HCT116 (cell line): ENCODE measurements at regions of chr9 and their contacts with region 1.

Region 1: DNA sequence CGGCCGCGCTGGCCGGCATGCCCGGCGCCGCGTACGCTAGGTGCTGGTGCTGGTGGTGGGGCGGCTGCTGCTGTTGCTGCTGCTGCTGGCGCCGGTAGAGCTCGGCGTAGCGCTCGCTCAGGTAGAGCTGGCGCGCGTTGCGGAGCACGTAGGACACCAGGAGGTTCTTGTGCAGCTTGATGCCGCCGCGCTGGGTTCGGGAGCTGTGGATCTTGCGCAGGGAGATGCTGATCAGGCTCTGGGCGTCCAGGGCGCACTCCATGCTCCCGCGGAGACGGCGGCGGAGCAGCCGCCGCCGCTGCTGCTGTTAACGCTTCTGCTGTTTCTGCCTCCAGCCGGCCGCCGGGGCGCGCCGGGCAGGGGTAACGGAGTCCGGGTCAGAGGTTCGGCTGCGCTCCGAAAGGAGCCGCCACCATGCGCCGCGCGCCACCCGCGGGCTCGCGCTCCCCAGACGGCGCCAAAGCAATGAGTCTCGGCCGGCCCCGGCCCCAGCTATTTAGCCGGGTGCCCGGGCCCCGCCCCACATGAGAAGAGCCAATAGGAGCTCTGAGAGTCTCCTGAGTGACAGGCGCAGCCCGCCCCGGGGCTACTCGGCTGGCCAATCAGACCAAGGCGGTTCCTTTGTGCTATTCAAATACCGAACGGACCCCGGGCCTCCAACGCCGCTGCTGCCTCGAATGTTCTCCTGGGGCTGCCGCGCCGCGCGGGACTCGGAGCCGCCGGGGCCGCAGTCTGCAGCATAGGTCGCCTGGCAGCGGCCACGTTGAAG is at the start of gene IER5L:
- DNase-seq: peak; percentile 91
- ATAC-seq: peak; percentile 71
- H3K4me3 ChIP-seq: peak within 1 kb of the TSS; percentile 79 to 92
- H3K27ac ChIP-seq: peak within 1 kb of the TSS; percentile 98
- H3K4me1 ChIP-seq: peaks cover 56 to 80% of the 10 kb centered on the region in 2 experiments
- H3K27me3 ChIP-seq: no peaks in the 10 kb centered on the region
- CTCF ChIP-seq: no peak
- POLR2A ChIP-seq: peak; percentile 99
- RAD21 ChIP-seq: no peak
- total RNA-seq, gene IER5L: 195 TPM

Region 2: GRCh38 chr9:128881901-128882681 is 295.9 kb before region 1 on chr9 and contains the starts of genes KYAT1 and LRRC8A:
- CTCF ChIA-PET with region 1: no interaction called
- POLR2A ChIA-PET with region 1: no interaction called
- RAD21 ChIA-PET with region 1: no interaction called
- intact Hi-C with region 1: no loop called
- DNase-seq: peak; percentile 92
- ATAC-seq: peak; percentile 88
- H3K4me3 ChIP-seq: peak within 1 kb of the TSS; percentile 55 to 100
- H3K27ac ChIP-seq: peak within 1 kb of the TSS; percentile 76
- H3K4me1 ChIP-seq: peaks cover 7 to 25% of the 10 kb centered on the region in 2 experiments; a peak in 2 of 4 replicates
- H3K27me3 ChIP-seq: no peaks in the 10 kb centered on the region
- CTCF ChIP-seq: 0 out of 6 replicates have a peak, but pooled peaks of 1 of the 3 experiments have one; percentile 5
- POLR2A ChIP-seq: peak; percentile 75
- RAD21 ChIP-seq: no peak
- total RNA-seq, gene KYAT1: 10.1 TPM
- total RNA-seq, gene LRRC8A: 22.0 TPM

Region 3: DNA sequence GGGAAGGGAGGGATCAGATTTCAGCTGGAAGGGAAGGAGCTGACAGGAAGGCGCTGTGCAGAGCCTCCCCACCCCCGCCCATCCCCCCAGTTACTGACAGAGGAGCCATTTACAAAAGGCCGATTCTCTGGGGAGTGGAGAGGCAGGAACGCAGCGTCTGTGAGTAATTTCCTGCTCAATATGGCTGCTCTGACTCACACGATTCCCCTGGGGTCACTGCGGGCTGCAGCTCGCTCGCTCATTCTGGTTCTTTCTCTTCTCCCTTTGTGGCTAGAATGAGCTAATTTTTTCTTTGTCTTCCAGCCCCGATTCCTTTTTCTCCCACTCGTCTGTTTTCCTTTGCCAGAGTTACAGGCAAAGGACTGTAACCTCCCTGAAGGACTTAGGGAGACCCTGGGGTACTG is 38.0 kb before region 1 on chr9:
- CTCF ChIA-PET with region 1: interaction called, 23 read pairs
- POLR2A ChIA-PET with region 1: interaction called, 13 read pairs
- RAD21 ChIA-PET with region 1: interaction called, 3 to 7 read pairs
- intact Hi-C with region 1: no loop called
- DNase-seq: peak; percentile 95
- ATAC-seq: peak; percentile 78
- H3K4me3 ChIP-seq: peak overlapping the region; percentile 60 to 69
- H3K27ac ChIP-seq: peak overlapping the region; percentile 99
- H3K4me1 ChIP-seq: peaks cover 39 to 70% of the 10 kb centered on the region in 2 experiments
- H3K27me3 ChIP-seq: no peaks in the 10 kb centered on the region
- CTCF ChIP-seq: no peak
- POLR2A ChIP-seq: no peak
- RAD21 ChIP-seq: no peak

Region 4: GRCh38 chr9:129198319-129199011 is 20.5 kb after region 1 on chr9:
- CTCF ChIA-PET with region 1: no interaction called
- POLR2A ChIA-PET with region 1: interaction called, 12 read pairs
- RAD21 ChIA-PET with region 1: no interaction called
- intact Hi-C with region 1: no loop called
- DNase-seq: no peak
- ATAC-seq: 0 out of 2 replicates have a peak, but pooled peaks have one; percentile 15
- H3K4me3 ChIP-seq: no peak overlapping the region
- H3K27ac ChIP-seq: peak overlapping the region; percentile 77
- H3K4me1 ChIP-seq: peaks cover 25 to 31% of the 10 kb centered on the region in 2 experiments
- H3K27me3 ChIP-seq: no peaks in the 10 kb centered on the region
- CTCF ChIP-seq: no peak
- POLR2A ChIP-seq: no peak
- RAD21 ChIP-seq: no peak

Region 5: GRCh38 chr9:129413537-129414376 is 235.8 kb after region 1 on chr9:
- CTCF ChIA-PET with region 1: no interaction called
- POLR2A ChIA-PET with region 1: interaction called, 4 read pairs
- RAD21 ChIA-PET with region 1: no interaction called
- intact Hi-C with region 1: loop called (anchors 2 kb)
- DNase-seq: peak; percentile 81
- ATAC-seq: peak; percentile 85
- H3K4me3 ChIP-seq: peak overlapping the region; percentile 56 to 63
- H3K27ac ChIP-seq: peak overlapping the region; percentile 91
- H3K4me1 ChIP-seq: peaks cover 40 to 69% of the 10 kb centered on the region in 2 experiments
- H3K27me3 ChIP-seq: no peaks in the 10 kb centered on the region
- CTCF ChIP-seq: no peak
- POLR2A ChIP-seq: peak; percentile 17
- RAD21 ChIP-seq: no peak

Region 6: DNA sequence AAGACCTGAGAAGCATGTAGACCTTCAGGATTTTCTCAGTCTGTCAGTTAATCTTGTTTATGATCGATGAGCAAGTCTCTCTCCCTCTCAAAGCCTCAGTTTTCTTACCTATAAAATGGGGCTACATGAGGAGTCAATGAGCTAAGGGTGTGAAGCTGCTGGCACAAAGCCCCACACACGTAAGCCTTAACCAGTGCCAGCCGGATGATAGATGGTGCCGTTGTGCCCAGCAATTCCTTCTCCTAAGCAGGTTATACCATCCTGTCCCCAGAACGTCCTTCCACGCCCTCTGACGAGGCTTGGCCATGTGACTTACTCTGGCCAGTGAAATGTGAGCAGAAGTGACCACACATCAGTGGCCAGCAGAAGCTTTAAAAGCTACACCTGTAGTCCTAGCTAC is 263.9 kb after region 1 on chr9:
- CTCF ChIA-PET with region 1: no interaction called
- POLR2A ChIA-PET with region 1: no interaction called
- RAD21 ChIA-PET with region 1: no interaction called
- intact Hi-C with region 1: no loop called
- DNase-seq: no peak
- ATAC-seq: peak; percentile 64
- H3K4me3 ChIP-seq: no peak overlapping the region
- H3K27ac ChIP-seq: no peak overlapping the region
- H3K4me1 ChIP-seq: peaks cover 11 to 34% of the 10 kb centered on the region in 2 experiments; a peak in 3 of 4 replicates
- H3K27me3 ChIP-seq: no peaks in the 10 kb centered on the region
- CTCF ChIP-seq: no peak
- POLR2A ChIP-seq: no peak
- RAD21 ChIP-seq: no peak

Region 7: GRCh38 chr9:129495534-129496325 is 317.8 kb after region 1 on chr9:
- CTCF ChIA-PET with region 1: interaction called, 16 read pairs
- POLR2A ChIA-PET with region 1: interaction called, 23 read pairs
- RAD21 ChIA-PET with region 1: interaction called in 1 of 2 experiments, 3 read pairs
- intact Hi-C with region 1: no loop called
- DNase-seq: peak; percentile 82
- ATAC-seq: peak; percentile 71
- H3K4me3 ChIP-seq: peak overlapping the region; percentile 62 to 67
- H3K27ac ChIP-seq: peak overlapping the region; percentile 100
- H3K4me1 ChIP-seq: peaks cover 74 to 100% of the 10 kb centered on the region in 2 experiments
- H3K27me3 ChIP-seq: no peaks in the 10 kb centered on the region
- CTCF ChIP-seq: no peak
- POLR2A ChIP-seq: no peak
- RAD21 ChIP-seq: no peak

Region 8: GRCh38 chr9:129513282-129513681 is 335.3 kb after region 1 on chr9:
- CTCF ChIA-PET with region 1: no interaction called
- POLR2A ChIA-PET with region 1: no interaction called
- RAD21 ChIA-PET with region 1: no interaction called
- intact Hi-C with region 1: no loop called
- DNase-seq: no peak
- ATAC-seq: no peak
- H3K4me3 ChIP-seq: no peak overlapping the region
- H3K27ac ChIP-seq: no peak overlapping the region
- H3K4me1 ChIP-seq: peaks cover 2 to 14% of the 10 kb centered on the region in 2 experiments; a peak in 2 of 4 replicates
- H3K27me3 ChIP-seq: no peaks in the 10 kb centered on the region
- CTCF ChIP-seq: no peak
- POLR2A ChIP-seq: no peak
- RAD21 ChIP-seq: no peak

Region 9: GRCh38 chr9:129557192-129558036 is 379.4 kb after region 1 on chr9:
- CTCF ChIA-PET with region 1: no interaction called
- POLR2A ChIA-PET with region 1: interaction called, 11 read pairs
- RAD21 ChIA-PET with region 1: no interaction called
- intact Hi-C with region 1: loop called (anchors 5 kb)
- DNase-seq: peak; percentile 89
- ATAC-seq: peak; percentile 79
- H3K4me3 ChIP-seq: peak overlapping the region; percentile 33 to 45
- H3K27ac ChIP-seq: peak overlapping the region; percentile 97
- H3K4me1 ChIP-seq: peaks cover 90 to 99% of the 10 kb centered on the region in 2 experiments
- H3K27me3 ChIP-seq: no peaks in the 10 kb centered on the region
- CTCF ChIP-seq: no peak
- POLR2A ChIP-seq: peak; percentile 57
- RAD21 ChIP-seq: no peak

Region 10: GRCh38 chr9:129610473-129611301 is 432.7 kb after region 1 on chr9:
- CTCF ChIA-PET with region 1: interaction called, 9 read pairs
- POLR2A ChIA-PET with region 1: interaction called, 16 read pairs
- RAD21 ChIA-PET with region 1: no interaction called
- intact Hi-C with region 1: loop called (anchors 2 kb)
- DNase-seq: no peak
- ATAC-seq: peak; percentile 43
- H3K4me3 ChIP-seq: peak overlapping the region; percentile 51 to 64
- H3K27ac ChIP-seq: peak overlapping the region; percentile 96
- H3K4me1 ChIP-seq: peaks cover 63 to 87% of the 10 kb centered on the region in 2 experiments
- H3K27me3 ChIP-seq: no peaks in the 10 kb centered on the region
- CTCF ChIP-seq: peak in 2 of 3 experiments; percentile 79 to 85; a peak in 4 of 6 replicates
- POLR2A ChIP-seq: no peak
- RAD21 ChIP-seq: no peak